ENCODE measurements at regions of chr20 and their contacts with region 1.

Region 1: GRCh38 chr20:58980700-58981627 is at the start of gene NELFCD:
- DNase-seq: peak; percentile 95
- total RNA-seq, gene NELFCD: 34.7 TPM

Region 2: GRCh38 chr20:58890518-58891085 is 90.4 kb before region 1 on chr20:
- intact Hi-C with region 1: loop called (anchors 2 kb)
- DNase-seq: peak; percentile 88

Region 3: DNA sequence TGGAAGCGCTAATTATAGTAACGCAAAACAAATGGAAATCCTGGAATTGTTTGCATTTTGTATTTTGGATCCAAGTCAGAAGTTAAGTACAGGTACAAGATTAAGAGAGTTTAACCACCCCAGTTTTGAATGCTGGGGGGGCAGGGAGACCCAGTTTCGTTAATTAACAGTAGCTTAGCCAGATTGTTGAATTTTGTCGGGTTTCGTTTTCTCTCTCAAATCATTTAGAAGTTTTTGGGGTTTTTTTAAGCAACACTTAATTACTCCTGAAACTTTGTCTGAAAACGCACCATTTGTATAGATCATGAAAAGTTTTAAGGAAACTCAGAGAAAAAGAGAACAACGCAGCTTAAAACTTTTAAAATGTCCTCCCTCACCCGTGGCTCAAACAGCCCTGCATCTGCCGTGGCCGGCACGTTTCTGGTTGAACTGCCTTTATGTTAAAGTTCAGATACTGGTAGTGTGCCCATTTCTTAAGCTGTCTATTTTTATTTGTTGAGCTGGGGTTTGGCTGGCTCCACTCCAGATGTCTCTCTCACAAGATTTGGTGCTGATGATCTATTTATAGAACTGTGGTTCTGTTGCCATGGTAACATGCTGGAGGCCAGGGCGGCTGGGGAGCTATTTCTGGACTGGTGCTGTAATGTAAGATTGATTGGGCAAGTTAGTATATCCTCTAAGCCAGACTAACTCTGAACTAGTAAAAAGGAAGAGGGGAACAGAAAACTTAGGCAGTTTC is 73.4 kb before region 1 on chr20:
- intact Hi-C with region 1: loop called (anchors 5 kb)
- DNase-seq: peak; percentile 92

Region 4: DNA sequence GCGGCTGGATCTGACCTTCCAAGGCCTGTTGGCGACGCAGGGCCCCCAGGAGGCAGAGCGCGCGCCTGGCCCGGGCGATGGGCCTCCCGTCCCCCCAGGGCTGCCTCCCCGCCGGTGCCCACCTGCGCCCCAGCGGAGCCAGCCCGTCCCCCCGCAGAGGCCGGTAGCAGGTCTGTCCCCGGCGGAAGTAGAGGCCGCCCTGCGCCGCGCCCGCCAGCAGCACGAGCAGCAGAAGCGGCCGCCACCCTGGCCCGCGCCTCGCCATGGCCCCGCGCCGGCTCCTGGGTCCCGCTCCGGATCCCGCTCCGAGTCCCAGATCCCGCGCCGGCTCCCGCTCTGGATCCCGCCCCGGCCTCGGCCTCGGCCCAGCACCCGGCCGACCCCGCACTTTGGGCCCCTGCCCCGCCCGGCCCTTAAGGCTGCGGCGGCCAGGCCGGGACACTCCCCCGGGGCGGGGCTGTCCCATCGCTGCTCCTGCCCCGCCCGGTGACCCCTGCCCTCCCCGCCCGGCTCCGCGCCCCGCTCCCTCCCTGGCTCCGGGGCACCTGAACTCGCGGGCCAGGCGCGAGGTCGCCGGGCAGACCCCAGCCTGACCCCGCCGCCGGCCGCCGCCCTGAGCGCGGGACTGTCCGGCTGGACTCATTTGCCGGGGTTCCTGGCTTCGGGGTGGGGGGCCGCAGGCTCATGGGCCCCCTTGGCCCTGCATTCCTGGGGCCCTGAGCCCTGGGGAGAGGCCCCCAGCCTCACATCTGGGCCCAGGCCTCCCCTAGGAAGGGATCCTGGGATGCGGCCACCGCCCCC is 26.1 kb after region 1 on chr20 and contains the start of gene CTSZ:
- intact Hi-C with region 1: loop called (anchors 1 kb)
- DNase-seq: peak; percentile 86
- total RNA-seq, gene CTSZ: 157 TPM

Region 5: GRCh38 chr20:59032023-59032712 is 51.2 kb after region 1 on chr20 and contains the start of gene ATP5F1E:
- intact Hi-C with region 1: loop called (anchors 5 kb)
- DNase-seq: peak; percentile 97
- total RNA-seq, gene ATP5F1E: 123 TPM